ENCODE measurements at regions of chr6 and their contacts with region 1.

Region 1: DNA sequence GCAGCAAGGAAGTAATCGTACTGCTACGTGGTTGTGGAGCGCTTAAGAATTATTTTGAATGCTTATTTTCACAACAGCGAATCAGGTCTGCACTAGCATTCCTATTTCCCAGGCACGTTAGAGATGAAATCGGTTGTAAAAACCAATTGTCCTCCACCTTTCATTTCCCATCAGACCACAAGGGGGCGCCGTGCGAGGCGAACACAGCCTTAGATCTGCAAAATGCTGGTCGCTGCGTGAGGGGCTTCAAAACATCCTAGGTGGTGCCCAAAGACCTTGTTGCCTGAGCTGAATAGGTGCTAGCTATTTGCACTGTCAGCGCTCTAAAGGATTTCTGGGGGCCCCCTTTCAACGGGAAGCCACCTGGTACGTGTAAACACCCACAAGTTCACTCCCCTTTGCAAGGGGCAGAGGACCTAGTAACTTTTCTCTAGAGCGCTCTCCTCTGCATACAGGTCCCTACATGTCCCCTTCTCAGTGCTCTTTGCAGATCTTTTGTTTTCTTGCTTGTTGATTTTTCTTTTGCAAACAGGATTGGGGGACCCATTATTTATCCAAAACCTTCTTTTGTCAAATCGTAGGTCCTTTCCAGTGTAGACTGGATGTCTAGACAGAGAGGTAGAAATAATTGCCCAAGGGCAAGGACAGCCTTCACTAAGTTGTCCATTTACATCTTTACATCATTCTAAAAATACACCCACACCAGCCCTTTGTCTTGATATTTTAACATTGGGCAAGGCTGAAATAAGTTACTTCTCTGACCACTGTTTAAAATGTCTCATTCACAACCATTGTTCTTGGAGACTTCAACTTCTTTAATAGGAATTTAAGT is 59.8 kb downstream of the NEDD9 start:
- DNase-seq: peak; percentile 81
- ATAC-seq: peak; percentile 87
- H3K4me3 Mint-ChIP-seq: peak overlapping the region; percentile 17
- H3K27ac Mint-ChIP-seq: peak overlapping the region; percentile 52
- H3K4me1 Mint-ChIP-seq: peaks cover 25% of the 10 kb centered on the region
- H3K27me3 Mint-ChIP-seq: no peaks in the 10 kb centered on the region

Region 2: DNA sequence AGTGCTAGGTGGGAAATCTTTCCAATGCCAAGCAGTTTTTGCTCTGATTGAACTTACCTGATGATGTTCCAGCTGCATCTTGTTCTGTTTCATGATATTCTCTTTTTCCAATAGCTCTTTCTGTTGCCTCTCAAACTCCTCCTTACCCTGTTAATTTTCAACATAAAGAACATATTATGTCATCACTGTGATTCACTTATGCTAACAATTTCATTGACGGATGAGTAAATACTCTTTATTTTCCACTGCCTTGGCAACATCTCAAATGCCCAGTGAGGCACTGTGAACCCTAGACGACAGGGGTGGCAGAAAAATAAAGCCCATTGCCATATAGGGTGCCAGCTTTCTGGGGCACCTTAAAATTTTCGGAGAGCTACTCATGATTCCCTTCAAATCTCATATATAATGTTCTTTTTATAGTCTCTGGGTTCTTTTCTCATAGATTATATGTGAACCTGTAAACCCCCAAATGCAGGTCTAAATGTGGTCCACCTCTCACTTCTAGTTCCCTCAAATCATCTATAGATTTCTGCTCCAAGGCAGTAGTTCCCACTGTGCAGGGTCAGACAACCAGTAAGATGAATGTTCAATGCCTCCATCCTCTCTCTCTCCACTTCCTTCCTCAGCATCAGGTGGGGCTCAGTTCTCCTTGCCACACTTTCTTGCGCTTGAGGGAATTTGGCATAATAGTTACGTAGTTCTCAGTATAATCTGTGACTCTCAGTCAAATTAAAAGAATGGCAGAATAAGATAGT is 15.6 kb after region 1 on chr6:
- CTCF ChIA-PET with region 1: interaction called, 14 read pairs
- DNase-seq: no peak
- ATAC-seq: no peak
- H3K4me3 Mint-ChIP-seq: no peak overlapping the region
- H3K27ac Mint-ChIP-seq: no peak overlapping the region
- H3K4me1 Mint-ChIP-seq: no peaks in the 10 kb centered on the region
- H3K27me3 Mint-ChIP-seq: no peaks in the 10 kb centered on the region

Region 3: GRCh38 chr6:11198663-11199603 is 26.2 kb after region 1 on chr6:
- CTCF ChIA-PET with region 1: interaction called, 11 read pairs
- DNase-seq: peak; percentile 78
- ATAC-seq: peak; percentile 82
- H3K4me3 Mint-ChIP-seq: peak overlapping the region; percentile 20
- H3K27ac Mint-ChIP-seq: peak overlapping the region; percentile 90
- H3K4me1 Mint-ChIP-seq: peaks cover 75% of the 10 kb centered on the region
- H3K27me3 Mint-ChIP-seq: no peaks in the 10 kb centered on the region

Measured in activated CD8-positive, alpha-beta memory T cell treated with anti-CD3 and anti-CD28 coated beads, Interleukin-2, amount 10 ng/mL, durations not matched to agents 7 days and 5 days (primary cell).